Activated CD4-positive, alpha-beta T cell treated with anti-CD3 and anti-CD28 coated beads for 36 hours (primary cell): ENCODE measurements at regions of chr19 and their contacts with region 1.

Region 1: DNA sequence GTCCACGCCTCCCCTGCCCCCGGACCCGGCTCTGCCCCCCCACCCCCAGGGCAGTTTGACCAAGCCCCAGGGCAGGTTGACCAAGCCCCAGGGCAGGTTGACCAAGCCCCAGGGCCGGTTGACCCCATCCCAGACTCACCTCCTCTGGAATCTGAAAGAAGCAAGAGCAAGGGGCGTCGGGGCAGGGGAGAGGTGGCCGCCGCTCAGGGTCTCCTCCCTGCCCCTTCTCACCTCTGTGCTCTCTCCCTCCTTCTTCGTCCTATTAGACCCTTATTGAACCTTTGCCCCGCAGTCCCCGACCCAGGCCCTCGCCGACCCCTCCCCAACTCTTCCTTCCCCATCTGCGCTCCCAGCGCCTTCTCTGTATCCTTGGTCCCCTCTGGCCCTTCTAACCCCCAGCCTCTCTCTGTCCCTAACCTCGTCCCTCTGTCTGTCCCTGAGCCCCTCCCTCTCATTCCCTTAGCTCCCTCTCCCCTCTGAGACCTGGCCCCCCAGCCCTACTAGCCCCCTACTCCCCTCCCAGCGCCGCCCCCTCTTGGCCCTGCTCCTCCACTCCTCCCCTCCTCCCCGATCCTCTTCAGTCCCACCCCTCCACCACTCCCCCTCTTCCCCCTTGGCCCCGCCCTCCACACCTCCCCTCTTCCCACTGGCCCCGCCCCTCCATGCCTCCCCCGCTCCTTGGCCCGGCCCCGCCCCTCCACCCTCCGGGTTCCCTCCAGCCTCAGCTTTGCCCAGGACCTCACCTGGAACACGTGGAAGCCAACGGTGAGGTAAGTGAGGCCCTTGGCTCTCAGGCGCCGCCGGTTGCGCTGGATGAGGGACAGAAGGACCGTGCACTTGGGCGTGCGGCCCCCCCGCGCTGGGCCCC is 7.6 kb downstream of the CAPN12 start:
- DNase-seq: peak; percentile 89
- ATAC-seq: peak; percentile 40
- H3K4me3 Mint-ChIP-seq: peak overlapping the region; percentile 60
- H3K27ac Mint-ChIP-seq: no peak overlapping the region
- H3K4me1 Mint-ChIP-seq: peaks cover 33% of the 10 kb centered on the region
- H3K27me3 Mint-ChIP-seq: peaks cover 7% of the 10 kb centered on the region

Region 2: DNA sequence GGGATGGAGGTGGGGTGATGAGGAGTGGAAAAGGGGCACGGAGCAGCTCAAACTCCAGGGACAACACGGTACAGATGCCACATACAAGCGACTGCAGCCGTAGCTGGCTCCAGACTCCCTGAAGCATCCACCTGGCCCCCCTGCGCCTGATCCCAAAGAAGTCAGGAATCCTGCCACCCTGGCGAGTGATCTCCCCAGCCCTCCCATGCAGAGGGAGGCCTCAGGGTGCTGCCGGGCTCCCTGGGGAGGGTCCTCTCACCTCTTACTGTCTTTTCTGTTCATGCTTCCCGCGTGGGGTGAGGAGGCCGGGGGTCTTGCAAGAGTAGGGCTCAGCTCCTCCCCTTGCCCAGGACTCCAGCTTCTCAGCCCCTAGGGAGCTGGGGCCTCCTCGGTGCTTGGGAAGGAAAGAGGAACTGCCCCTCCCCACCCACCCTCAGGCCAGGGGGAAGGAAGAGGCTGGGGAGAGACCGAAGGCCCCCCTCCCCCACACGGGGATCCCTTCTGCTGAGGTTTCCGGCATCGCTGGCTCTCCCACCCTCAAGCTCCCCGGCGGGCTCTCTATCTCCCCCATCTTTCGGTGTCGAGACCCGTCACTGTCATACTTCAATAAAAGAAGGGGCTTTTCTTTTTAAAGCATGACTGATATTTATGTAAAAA is 310.7 kb before region 1 on chr19 and contains the start of gene RASGRP4:
- CTCF ChIA-PET with region 1: no interaction called
- POLR2A ChIA-PET with region 1: no interaction called
- intact Hi-C with region 1: no loop called
- DNase-seq: peak; percentile 78
- ATAC-seq: peak; percentile 27
- H3K4me3 Mint-ChIP-seq: peak within 1 kb of the TSS; percentile 60
- H3K27ac Mint-ChIP-seq: peak within 1 kb of the TSS; percentile 90
- H3K4me1 Mint-ChIP-seq: peaks cover 33% of the 10 kb centered on the region
- H3K27me3 Mint-ChIP-seq: no peaks in the 10 kb centered on the region
- total RNA-seq, gene RASGRP4: 5.6 to 5.9 TPM

Region 3: DNA sequence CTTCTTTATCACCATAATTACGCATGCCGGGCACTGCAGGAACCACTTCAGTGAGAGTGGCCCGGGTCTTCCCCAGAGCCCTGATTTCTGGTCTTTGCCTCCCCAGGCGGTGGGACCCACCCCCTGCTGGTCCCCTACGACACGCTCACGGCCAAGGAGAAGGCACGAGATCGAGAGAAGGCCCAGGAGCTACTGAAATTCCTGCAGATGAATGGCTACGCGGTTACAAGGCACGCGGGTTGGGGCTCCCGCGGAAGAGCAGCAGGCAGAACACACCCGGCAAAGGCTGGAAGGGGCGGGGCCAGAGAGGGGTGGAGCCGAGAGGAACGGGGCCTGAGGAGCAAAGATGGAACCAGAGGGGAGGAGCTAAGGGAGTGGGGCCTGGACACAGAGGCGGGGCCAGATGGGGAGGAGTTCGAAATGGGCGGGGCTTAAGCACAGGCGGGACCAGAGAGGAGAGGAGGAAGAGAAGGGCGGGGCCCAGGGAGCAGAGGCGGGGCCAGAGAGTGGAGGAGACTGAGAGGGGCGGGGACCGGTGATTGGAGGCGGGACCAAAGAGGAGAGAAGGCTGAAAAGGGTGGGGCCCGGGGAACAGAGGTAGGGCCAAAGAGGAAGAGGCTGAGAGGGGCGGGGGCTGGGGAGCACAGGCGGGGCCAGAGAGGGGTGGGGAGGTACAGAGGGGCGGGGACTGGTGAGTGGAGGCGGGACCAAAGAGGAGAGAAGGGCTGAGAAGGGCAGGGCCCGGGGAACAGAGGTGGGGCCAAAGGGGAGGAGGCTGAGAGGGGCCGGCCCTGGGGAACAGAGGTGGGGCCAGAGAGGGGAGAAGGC is 229.7 kb before region 1 on chr19:
- CTCF ChIA-PET with region 1: no interaction called
- POLR2A ChIA-PET with region 1: no interaction called
- intact Hi-C with region 1: loop called in 1 of 2 experiments (anchors 1 kb)
- DNase-seq: peak; percentile 98
- ATAC-seq: peak; percentile 94
- H3K4me3 Mint-ChIP-seq: no peak overlapping the region
- H3K27ac Mint-ChIP-seq: no peak overlapping the region
- H3K4me1 Mint-ChIP-seq: peaks cover 6% of the 10 kb centered on the region
- H3K27me3 Mint-ChIP-seq: peaks cover 2% of the 10 kb centered on the region

Region 4: GRCh38 chr19:38831142-38831605 is 94.5 kb after region 1 on chr19:
- CTCF ChIA-PET with region 1: interaction called, 3 read pairs
- POLR2A ChIA-PET with region 1: interaction called, 4 read pairs
- intact Hi-C with region 1: loop called in 1 of 2 experiments (anchors 1 kb)
- DNase-seq: peak; percentile 58
- ATAC-seq: peak; percentile 53
- H3K4me3 Mint-ChIP-seq: peak overlapping the region; percentile 87
- H3K27ac Mint-ChIP-seq: peak overlapping the region; percentile 83
- H3K4me1 Mint-ChIP-seq: peaks cover 25% of the 10 kb centered on the region
- H3K27me3 Mint-ChIP-seq: no peaks in the 10 kb centered on the region

Region 5: DNA sequence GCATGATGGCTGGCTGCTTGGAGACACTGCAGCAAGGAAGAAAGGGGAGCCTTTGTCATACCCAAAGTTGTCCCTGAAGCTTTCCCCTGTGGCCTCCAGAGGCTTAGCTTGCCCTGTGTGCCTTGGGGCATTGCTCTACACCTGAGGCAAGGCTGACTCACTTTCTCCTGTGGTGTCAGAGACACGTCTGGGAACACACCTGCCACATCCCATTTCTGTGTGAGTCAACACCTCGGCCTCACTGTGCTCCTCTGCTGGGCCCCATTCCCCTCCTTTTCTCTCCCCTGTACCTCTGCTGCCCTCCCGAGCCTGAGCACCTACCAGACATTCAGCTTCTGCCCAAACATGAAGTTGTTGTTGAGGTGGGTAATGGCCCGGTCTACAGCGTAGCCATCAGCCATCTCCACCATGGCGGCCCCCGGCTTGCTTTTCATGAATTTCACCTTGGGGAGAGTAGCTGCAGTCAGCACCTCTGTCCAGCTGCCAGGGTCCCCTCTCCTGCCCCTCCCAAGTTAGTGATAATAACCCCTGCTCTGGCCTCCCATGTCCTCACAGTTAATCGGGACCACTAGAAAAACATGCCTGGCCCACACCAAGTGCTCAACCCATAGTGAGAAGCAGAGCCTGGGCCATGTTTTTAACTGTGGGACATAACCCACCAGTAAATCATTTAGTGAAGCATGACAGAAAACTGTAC is 102.1 kb after region 1 on chr19:
- CTCF ChIA-PET with region 1: interaction called, 3 read pairs
- POLR2A ChIA-PET with region 1: interaction called, 6 read pairs
- intact Hi-C with region 1: loop called (anchors 2 to 5 kb)
- DNase-seq: peak; percentile 89
- ATAC-seq: peak; percentile 83
- H3K4me3 Mint-ChIP-seq: peak overlapping the region; percentile 9
- H3K27ac Mint-ChIP-seq: peak overlapping the region; percentile 86
- H3K4me1 Mint-ChIP-seq: peaks cover 58% of the 10 kb centered on the region
- H3K27me3 Mint-ChIP-seq: no peaks in the 10 kb centered on the region

Region 6: GRCh38 chr19:38949580-38950367 is 213.1 kb after region 1 on chr19:
- CTCF ChIA-PET with region 1: no interaction called
- POLR2A ChIA-PET with region 1: no interaction called
- intact Hi-C with region 1: loop called in 1 of 2 experiments (anchors 5 kb)
- DNase-seq: peak; percentile 96
- ATAC-seq: peak; percentile 94
- H3K4me3 Mint-ChIP-seq: peak overlapping the region; percentile 16
- H3K27ac Mint-ChIP-seq: no peak overlapping the region
- H3K4me1 Mint-ChIP-seq: peaks cover 14% of the 10 kb centered on the region
- H3K27me3 Mint-ChIP-seq: peaks cover 15% of the 10 kb centered on the region